B cell (primary cell): ENCODE measurements at regions of chr2 and their contacts with region 1.

Region 1: GRCh38 chr2:101173707-101174295 is 22.6 kb upstream of the TBC1D8 start:
- DNase-seq: peak; percentile 62
- ATAC-seq: peak; percentile 99
- H3K4me3 ChIP-seq: no peak overlapping the region
- H3K4me3 Mint-ChIP-seq: peak overlapping the region; percentile 44
- H3K27ac ChIP-seq: peak overlapping the region in 1 of 2 donors; percentile 69
- H3K27ac Mint-ChIP-seq: peak overlapping the region; percentile 84
- H3K4me1 ChIP-seq: peaks cover 14 to 20% of the 10 kb centered on the region in 2 donors
- H3K4me1 Mint-ChIP-seq: peaks cover 24% of the 10 kb centered on the region
- H3K27me3 ChIP-seq: no peaks in the 10 kb centered on the region
- H3K27me3 Mint-ChIP-seq: no peaks in the 10 kb centered on the region
- CTCF ChIP-seq: no peak

Region 2: DNA sequence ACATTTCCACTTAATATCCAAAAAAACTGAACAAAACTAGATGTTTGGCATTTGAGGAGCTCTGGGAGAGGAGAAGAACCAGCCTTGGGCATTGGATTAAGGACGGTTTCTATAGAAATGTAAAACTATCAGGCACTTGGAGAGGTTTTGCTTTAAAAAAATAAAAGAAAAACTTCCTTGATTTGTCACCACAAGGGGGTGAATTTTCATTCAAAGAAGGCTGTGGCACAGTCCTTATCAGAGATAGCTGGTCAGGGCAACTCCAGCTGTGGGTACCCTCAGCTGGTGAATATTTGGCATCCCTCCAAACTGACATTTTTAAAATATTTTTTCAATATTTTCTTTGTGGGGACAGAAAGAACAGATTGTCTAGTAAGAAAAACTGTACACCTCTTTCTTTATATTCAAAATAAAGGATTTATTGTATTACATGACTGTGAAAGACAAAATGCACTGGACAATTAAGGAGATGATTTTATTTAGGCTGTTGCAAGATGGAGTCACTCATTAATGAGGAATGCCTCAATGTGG is 23.5 kb after region 1 on chr2:
- CTCF ChIA-PET with region 1: interaction called, 13 read pairs
- POLR2A ChIA-PET with region 1: no interaction called
- intact Hi-C with region 1: no loop called
- DNase-seq: no peak
- ATAC-seq: no peak
- H3K4me3 ChIP-seq: no peak overlapping the region
- H3K4me3 Mint-ChIP-seq: no peak overlapping the region
- H3K27ac ChIP-seq: no peak overlapping the region
- H3K27ac Mint-ChIP-seq: no peak overlapping the region
- H3K4me1 ChIP-seq: no peaks in the 10 kb centered on the region
- H3K4me1 Mint-ChIP-seq: no peaks in the 10 kb centered on the region
- H3K27me3 ChIP-seq: no peaks in the 10 kb centered on the region
- H3K27me3 Mint-ChIP-seq: peaks cover 7% of the 10 kb centered on the region
- CTCF ChIP-seq: peak; percentile 38